MCF 10A (cell line): ENCODE measurements at regions of chr13 and their contacts with region 1.

Region 1: DNA sequence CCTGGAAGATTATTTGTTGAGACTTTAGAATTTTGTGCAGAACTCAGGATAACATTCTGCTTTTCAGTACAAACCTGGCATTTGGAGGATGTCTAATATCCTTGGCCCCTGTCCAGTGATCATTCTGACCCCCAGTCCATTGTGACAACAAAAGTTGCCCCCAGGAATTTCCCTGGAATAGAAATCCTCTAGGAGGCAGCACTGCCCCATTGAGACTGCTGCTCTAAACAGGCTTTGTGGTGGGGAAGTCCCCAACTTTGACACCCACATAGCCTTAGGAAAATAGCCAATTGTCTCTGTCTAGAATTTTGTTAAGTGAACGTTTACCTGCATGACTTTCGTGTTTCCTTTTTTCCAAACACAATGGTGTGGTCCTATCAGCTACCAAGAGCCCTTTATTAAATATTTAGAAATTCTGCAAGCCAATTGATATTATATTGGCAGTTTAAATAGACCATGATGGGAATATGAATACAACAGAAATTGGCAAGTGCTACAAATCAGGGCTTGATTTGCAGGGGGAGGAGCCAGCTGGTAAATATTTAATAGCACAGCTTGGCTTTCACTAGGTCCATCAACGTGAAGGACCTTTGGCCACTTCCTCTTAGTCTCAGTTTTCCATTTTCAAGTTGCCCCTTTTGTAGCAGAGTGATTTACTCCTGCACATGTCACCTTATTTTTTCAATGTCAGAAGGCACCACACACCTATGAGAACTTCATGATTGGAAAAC is 451.7 kb downstream of the EFNB2 start:
- DNase-seq: peak; percentile 84
- H3K4me3 Mint-ChIP-seq: no peak overlapping the region
- H3K27ac Mint-ChIP-seq: no peak overlapping the region
- H3K4me1 Mint-ChIP-seq: peaks cover 22% of the 10 kb centered on the region
- H3K27me3 Mint-ChIP-seq: no peaks in the 10 kb centered on the region
- CTCF ChIP-seq: peak; percentile 73

Region 2: GRCh38 chr13:105016266-105016665 is 1067.5 kb before region 1 on chr13:
- CTCF ChIA-PET with region 1: no interaction called
- POLR2A ChIA-PET with region 1: no interaction called
- intact Hi-C with region 1: no loop called
- DNase-seq: no peak
- H3K4me3 Mint-ChIP-seq: no peak overlapping the region
- H3K27ac Mint-ChIP-seq: no peak overlapping the region
- H3K4me1 Mint-ChIP-seq: no peaks in the 10 kb centered on the region
- H3K27me3 Mint-ChIP-seq: no peaks in the 10 kb centered on the region
- CTCF ChIP-seq: no peak

Region 3: DNA sequence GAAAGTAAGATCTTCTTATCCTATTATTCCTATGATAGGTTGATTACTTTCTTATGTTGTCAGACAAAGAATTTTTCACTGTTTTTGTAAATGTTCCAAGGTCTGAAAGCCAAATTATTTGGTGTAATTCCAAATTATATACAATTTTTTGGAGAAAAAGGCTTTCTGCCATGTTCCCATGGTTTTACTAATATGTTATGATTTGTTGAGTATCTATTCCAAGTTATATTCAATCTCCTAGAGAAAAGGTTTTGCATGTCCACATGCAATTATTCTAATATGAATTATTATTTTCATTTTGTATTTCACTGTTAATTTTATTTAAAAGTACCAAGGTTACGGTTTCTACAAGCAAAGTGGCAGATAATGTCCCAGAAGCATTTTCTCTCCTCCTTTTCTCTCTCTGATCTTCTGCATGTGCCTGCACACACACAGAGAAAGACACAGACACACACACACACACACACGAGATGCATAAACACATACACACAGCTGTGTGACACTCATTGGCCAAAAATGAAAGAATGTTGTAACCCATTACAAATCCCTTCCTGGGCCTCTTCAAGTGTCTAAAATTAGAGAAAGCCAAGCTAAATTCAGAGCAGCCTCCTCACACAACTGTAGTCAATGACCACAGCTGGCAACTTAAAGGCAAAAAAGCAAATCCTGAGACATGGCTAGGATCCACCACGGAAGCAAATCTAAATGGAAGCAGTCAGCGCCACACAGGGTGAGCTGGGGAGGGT is 169.3 kb before region 1 on chr13:
- CTCF ChIA-PET with region 1: no interaction called
- POLR2A ChIA-PET with region 1: no interaction called
- intact Hi-C with region 1: no loop called
- DNase-seq: no peak
- H3K4me3 Mint-ChIP-seq: no peak overlapping the region
- H3K27ac Mint-ChIP-seq: no peak overlapping the region
- H3K4me1 Mint-ChIP-seq: peaks cover 12% of the 10 kb centered on the region
- H3K27me3 Mint-ChIP-seq: no peaks in the 10 kb centered on the region
- CTCF ChIP-seq: no peak

Region 4: DNA sequence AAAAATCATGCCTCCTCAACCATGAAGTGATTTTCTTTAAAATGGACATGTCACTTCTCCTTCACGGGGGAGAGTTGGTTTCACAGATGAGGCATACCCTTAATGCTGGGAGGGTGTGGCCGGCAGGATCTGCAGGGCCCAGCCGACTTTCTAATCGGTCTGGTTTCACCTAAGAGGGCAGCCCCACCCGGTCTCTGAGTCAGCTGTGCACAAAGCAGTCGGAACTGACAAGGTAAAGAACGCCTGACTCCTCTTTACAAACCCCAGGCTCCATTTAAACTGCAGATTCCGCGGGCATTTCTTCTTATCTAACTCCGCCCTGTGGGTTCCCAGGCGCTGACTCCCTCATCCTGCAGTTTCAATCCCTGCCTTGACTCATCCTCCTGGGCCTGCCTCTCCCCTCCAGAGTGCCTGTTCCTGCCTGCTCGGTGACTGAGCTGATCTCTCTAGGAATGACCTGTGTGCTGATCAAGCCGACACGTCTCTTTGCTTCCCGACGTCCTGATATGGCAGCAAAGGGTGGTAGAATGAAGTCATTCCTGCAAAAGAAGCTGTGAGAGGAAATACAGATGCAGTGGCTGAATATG is 388.3 kb after region 1 on chr13:
- CTCF ChIA-PET with region 1: no interaction called
- POLR2A ChIA-PET with region 1: no interaction called
- intact Hi-C with region 1: loop called (anchors 5 kb)
- DNase-seq: peak; percentile 94
- H3K4me3 Mint-ChIP-seq: peak overlapping the region; percentile 61
- H3K27ac Mint-ChIP-seq: peak overlapping the region; percentile 58
- H3K4me1 Mint-ChIP-seq: peaks cover 10% of the 10 kb centered on the region
- H3K27me3 Mint-ChIP-seq: no peaks in the 10 kb centered on the region
- CTCF ChIP-seq: no peak

Region 5: DNA sequence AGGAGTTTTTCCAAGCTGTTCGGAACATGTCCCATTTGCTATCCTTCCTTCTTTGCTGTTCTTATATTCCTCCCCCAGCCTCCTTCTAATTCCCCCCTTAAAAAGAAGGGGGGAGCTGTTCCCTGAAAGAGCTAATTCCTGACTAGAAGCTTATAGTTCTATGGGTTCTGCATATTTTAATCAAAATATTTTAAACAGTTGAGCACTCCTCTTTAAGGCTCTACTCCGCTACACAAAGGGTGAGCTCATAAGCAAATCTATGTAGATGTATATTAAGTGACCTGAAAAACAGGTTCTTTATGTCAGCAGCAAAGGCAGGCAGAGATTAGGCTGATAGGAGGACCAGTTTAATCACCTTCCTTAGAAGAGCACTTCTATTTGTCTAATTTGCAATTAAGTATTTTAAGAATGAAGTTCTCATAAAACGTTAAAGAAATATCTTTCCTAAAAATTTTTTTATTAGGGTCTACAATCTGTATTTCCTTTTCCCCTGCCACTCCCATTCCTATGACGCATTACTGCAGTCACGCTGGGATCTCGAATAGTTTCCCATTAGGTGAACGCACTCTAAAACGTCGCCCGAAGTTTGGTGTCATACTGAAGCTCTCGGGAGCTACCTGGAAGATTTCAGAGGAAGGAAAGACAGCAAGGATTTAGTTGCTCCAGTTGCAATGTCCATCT is 446.5 kb after region 1 on chr13:
- CTCF ChIA-PET with region 1: interaction called, 26 read pairs
- POLR2A ChIA-PET with region 1: interaction called, 3 read pairs
- intact Hi-C with region 1: loop called (anchors 1 kb)
- DNase-seq: no peak
- H3K4me3 Mint-ChIP-seq: peak overlapping the region; percentile 21
- H3K27ac Mint-ChIP-seq: peak overlapping the region; percentile 64
- H3K4me1 Mint-ChIP-seq: peaks cover 32% of the 10 kb centered on the region
- H3K27me3 Mint-ChIP-seq: no peaks in the 10 kb centered on the region
- CTCF ChIP-seq: no peak